ENCODE measurements at regions of chr1 and their contacts with region 1.

Region 1: DNA sequence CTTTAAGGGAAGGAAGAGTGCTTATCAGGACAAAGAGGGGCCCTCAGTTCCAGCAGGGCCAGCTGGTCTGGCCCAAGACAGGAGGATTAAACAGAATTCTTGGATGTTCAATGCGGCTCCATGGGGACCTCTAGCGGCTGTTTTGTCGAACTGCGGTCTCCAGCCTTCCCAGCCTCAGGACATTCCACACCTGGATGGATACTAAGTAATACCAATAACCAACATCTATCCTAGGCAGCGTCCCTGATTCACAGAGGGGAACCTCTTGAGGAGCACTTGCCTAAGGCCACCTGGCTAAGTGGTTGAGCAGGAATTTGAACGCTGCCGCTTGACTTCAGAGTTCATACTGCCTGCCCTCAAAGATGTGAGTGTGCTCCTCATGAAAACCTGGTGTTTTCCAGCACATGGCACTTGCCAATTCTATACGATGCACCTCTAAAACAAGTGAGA is 15.5 kb upstream of the CD247 start:
- DNase-seq: peak; percentile 50
- ATAC-seq: peak; percentile 65 to 88 (median 86)
- H3K4me3 ChIP-seq: no peak overlapping the region
- H3K27ac ChIP-seq: peak overlapping the region in 1 of 10 donors; percentile 22
- H3K4me1 ChIP-seq: peaks cover 0 to 13% (median 7%) of the 10 kb centered on the region in 9 donors
- H3K27me3 ChIP-seq: no peaks in the 10 kb centered on the region
- CTCF ChIP-seq: peak; percentile 86 to 95 (median 92)

Region 2: GRCh38 chr1:167066333-167067122 is 467.3 kb before region 1 on chr1:
- intact Hi-C with region 1: loop called (anchors 2 to 5 kb)
- DNase-seq: peak; percentile 66 to 82
- ATAC-seq: peak; percentile 85 to 94 (median 88)
- H3K4me3 ChIP-seq: peak overlapping the region in 7 of 10 donors; percentile 2 to 36 (median 24)
- H3K27ac ChIP-seq: no peak overlapping the region
- H3K4me1 ChIP-seq: peaks cover 0 to 12% (median 6%) of the 10 kb centered on the region in 9 donors
- H3K27me3 ChIP-seq: peaks cover 0 to 3% (median 0%) of the 10 kb centered on the region in 7 donors
- CTCF ChIP-seq: peak; percentile 87 to 98 (median 97)

Region 3: DNA sequence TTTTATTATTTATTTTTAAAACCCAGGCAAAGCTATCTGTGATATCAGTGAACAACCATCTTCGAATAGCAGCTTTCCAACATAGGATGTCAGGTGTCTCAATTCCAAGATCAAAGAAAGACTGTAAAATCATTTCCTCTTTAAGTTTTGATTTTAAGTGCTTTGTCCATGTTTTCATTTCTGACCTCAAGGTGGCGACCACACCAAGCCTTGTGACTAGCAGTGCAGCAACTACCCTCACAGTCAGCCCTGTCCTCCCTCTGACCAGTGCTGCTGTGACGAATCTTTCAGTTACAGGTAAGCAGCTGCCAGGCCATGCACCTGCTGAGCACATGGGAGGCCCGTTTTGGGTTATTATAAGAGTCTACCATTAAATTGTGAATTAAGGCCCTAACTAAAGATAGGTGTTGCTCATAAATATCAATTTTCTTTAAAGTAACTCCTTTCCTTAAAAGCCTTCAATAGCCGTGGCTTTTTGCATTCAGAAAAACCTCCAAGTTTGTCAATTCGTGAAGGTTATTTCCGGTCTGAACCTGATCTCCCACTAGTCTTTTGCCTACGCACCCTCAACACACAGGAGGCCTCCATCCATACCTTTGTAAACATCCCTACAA is 132.5 kb before region 1 on chr1:
- intact Hi-C with region 1: loop called in 6 of 10 experiments (anchors 5 to 10 kb)
- DNase-seq: peak in 1 of 2 donors; percentile 27
- ATAC-seq: peak in 3 of 8 donors; percentile 55
- H3K4me3 ChIP-seq: no peak overlapping the region
- H3K27ac ChIP-seq: no peak overlapping the region
- H3K4me1 ChIP-seq: peaks cover 0 to 10% (median 0%) of the 10 kb centered on the region in 9 donors
- H3K27me3 ChIP-seq: no peaks in the 10 kb centered on the region
- CTCF ChIP-seq: peak; percentile 16 to 67 (median 52)

Region 4: DNA sequence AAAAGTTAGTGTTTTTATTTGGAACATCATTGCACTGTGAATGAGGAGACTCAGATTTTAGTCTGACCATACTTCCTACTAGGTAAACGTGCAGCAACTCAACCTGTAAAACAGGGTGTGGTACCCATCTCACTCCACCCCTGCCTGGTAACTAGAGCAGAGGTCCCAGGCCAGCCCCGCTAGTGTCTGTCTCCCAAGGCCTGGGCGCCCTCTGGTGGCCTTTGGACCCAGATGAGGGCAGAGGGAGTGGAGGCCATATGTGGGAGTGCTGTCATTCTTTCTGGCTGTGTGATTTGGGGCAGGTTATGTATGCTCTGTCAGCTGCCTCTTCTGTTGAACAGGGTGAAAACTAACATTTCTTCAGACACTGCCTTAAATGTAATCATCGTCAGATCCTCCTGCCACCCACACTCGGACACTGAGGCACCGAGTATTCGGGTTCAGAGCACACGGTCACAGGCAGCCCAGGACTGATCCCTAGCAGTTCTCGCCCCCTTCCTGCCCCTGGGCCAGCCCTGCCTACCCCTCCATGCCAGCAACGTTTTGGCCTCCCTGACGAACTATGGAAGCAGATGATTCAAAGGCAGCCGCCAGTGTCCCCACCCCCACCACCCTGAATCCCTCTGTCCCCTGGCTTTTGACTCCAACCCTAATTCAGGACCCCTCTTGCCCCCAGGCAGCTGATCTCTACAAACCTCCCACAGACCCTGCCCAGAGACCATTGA is 91.6 kb before region 1 on chr1:
- intact Hi-C with region 1: loop called in 5 of 10 experiments (anchors 5 to 10 kb)
- DNase-seq: peak; percentile 83 to 87
- ATAC-seq: peak; percentile 88 to 97 (median 94)
- H3K4me3 ChIP-seq: no peak overlapping the region
- H3K27ac ChIP-seq: no peak overlapping the region
- H3K4me1 ChIP-seq: peaks cover 0 to 25% (median 9%) of the 10 kb centered on the region in 9 donors
- H3K27me3 ChIP-seq: peaks cover 0 to 33% (median 11%) of the 10 kb centered on the region in 7 donors
- CTCF ChIP-seq: peak; percentile 80 to 95 (median 91)

Region 5: DNA sequence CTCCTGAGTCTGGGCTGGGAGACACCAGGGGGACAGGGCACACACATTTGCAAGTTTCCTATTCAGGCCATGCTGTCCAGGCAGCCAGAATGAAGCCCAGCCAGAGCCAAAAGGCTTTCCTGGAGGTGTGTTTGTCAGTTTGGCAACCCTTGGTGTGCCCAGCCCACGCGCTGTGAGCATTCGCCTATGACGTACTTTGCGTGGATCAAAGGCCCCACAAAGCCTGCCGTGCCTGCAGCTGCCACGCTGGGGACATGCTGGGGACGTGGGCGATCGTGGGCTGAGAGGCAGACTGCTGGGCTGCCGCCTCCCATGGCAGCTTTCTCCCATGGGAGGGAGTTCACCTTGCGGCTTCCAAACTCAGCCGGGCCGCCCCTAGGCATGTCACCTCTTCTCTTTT is 73.0 kb before region 1 on chr1:
- intact Hi-C with region 1: loop called in 3 of 10 experiments (anchors 5 to 10 kb)
- DNase-seq: no peak
- ATAC-seq: no peak
- H3K4me3 ChIP-seq: no peak overlapping the region
- H3K27ac ChIP-seq: no peak overlapping the region
- H3K4me1 ChIP-seq: peaks cover 0 to 8% (median 3%) of the 10 kb centered on the region in 9 donors
- H3K27me3 ChIP-seq: no peaks in the 10 kb centered on the region
- CTCF ChIP-seq: no peak

Region 6: DNA sequence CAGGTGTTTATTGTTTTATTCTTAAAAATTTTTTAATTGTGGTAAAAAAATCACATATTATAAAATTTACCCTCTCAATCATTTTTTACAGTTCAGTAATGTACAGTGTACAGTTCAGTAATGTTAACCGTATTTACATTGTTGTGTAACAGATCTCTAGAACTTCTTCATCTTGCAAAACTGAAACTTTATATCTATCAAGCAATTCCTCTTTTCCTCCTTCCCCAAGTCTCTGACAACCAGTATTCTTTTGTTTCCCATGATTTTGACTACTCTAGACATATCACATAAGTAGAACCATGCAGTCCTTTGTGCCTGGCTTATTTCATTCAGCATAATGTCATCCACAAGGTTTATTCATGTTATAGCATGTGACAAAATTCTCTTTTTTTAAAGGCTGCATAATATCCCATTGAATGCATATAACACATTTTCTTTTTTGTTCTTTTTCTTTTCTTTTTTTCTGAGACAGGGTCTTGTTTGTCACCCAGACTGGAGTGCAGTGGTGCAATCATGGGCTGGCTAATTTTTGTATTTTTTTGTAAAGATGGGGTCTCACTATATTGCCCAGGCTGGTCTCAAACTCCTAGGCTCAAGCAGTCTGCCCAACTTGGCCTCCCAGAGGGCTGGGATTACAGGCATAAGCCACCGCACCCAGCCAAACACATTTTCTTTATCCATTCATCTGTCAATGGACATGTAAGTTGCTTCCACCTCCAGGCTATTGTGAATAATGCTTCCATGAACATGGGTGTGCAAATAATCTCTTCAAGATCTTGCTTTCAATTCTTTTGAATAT is 78.9 kb after region 1 on chr1:
- intact Hi-C with region 1: no loop called
- DNase-seq: no peak
- ATAC-seq: no peak
- H3K4me3 ChIP-seq: no peak overlapping the region
- H3K27ac ChIP-seq: peak overlapping the region in 1 of 10 donors; percentile 52
- H3K4me1 ChIP-seq: peaks cover 0 to 40% (median 16%) of the 10 kb centered on the region in 9 donors
- H3K27me3 ChIP-seq: no peaks in the 10 kb centered on the region
- CTCF ChIP-seq: no peak

Region 7: DNA sequence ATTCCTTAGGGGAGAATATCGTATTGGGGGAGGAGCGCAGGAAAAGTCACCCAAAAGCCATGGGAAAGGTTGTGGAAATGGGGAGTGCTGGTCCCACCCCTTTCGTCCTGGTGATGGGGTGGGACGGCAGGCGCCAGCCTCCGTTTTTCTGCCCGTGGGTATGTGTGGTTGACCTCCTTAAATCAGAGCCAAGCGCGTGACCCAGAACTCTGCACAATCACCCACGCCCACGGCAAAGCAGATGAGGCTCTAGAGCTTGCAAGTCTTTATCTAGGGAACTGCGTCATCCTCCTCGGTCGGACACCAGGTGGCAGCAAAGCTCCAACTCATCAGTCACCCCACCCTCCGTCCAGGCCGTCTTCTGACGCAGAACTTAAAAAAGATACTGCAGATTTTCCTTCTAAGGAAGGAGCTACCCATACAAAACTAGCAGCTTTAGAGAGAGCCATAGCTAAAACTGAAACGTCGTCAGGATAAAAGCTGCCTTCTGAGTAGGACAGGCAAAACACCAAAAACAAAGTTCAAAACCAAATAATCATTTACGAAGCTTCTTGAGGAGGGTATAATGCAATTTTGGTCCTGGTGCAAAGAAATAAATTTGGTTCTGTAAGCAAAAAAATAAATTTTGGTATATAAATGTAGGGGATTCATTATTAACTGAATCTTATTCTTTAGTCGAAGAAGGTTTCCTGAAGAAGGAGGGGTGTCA is 808.9 kb after region 1 on chr1:
- intact Hi-C with region 1: no loop called
- DNase-seq: peak; percentile 86 to 90
- ATAC-seq: peak; percentile 96 to 98 (median 98)
- H3K4me3 ChIP-seq: peak overlapping the region in 6 of 10 donors; percentile 30 to 37 (median 36)
- H3K27ac ChIP-seq: peak overlapping the region in 6 of 10 donors; percentile 24 to 66 (median 58)
- H3K4me1 ChIP-seq: peaks cover 0 to 33% (median 11%) of the 10 kb centered on the region in 9 donors
- H3K27me3 ChIP-seq: no peaks in the 10 kb centered on the region
- CTCF ChIP-seq: peak; percentile 68 to 90 (median 85)